Activated CD4-positive, alpha-beta memory T cell treated with anti-CD3 and anti-CD28 coated beads for 36 hours (primary cell): ENCODE measurements at regions of chr6 and their contacts with region 1.

Region 1: GRCh38 chr6:42547407-42548329 is 16.2 kb upstream of the UBR2 start:
- DNase-seq: peak; percentile 92
- H3K4me3 Mint-ChIP-seq: peak overlapping the region; percentile 62
- H3K27ac Mint-ChIP-seq: no peak overlapping the region
- H3K4me1 Mint-ChIP-seq: peaks cover 23% of the 10 kb centered on the region
- H3K27me3 Mint-ChIP-seq: peaks cover 4% of the 10 kb centered on the region

Region 2: DNA sequence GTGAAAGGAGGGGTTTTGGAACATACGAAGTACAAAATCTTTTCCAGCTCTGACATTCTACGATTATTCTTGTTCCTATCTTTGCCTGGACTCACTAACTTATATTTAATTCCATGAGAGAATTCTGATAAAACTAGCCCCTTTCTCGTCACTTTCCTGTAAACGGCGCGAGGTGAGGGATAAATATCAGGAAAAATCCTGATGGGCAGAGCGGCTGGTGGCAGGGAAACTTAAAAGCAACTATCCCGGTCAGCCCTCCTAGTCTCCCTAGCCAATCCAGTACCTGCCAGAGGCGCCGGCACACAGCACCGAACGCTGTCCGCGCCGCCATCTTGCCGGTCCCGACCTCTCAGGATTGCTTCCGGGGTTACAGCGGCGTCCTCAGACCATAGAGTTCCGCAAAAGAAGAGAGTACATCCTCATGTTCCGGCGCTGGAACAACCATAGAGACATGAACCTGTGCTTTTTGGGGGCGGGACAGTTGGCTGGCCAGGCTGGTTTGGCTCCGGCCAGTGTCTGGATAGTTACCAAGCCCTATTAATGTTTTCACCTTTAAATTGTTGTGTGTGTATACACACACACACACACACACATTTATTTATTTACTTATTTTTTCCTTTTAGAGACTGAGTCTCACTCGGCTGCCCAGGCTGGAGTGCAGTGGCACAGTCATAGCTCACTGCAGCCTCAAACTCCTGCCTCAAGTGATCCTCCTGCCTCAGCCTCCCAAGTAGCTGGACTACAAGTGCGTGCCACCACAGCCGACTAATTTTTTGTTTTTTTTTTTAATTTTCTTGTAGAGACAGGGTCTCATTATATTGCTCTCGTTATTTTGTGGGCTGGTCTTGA is 329.9 kb before region 1 on chr6 and contains the start of gene MRPS10:
- CTCF ChIA-PET with region 1: interaction called, 32 read pairs
- POLR2A ChIA-PET with region 1: interaction called, 6 read pairs
- intact Hi-C with region 1: loop called (anchors 5 kb)
- DNase-seq: peak; percentile 95
- H3K4me3 Mint-ChIP-seq: peak within 1 kb of the TSS; percentile 99
- H3K27ac Mint-ChIP-seq: peak within 1 kb of the TSS; percentile 94
- H3K4me1 Mint-ChIP-seq: peaks cover 39% of the 10 kb centered on the region
- H3K27me3 Mint-ChIP-seq: no peaks in the 10 kb centered on the region
- total RNA-seq, gene MRPS10: 38.6 to 40.3 TPM

Region 3: DNA sequence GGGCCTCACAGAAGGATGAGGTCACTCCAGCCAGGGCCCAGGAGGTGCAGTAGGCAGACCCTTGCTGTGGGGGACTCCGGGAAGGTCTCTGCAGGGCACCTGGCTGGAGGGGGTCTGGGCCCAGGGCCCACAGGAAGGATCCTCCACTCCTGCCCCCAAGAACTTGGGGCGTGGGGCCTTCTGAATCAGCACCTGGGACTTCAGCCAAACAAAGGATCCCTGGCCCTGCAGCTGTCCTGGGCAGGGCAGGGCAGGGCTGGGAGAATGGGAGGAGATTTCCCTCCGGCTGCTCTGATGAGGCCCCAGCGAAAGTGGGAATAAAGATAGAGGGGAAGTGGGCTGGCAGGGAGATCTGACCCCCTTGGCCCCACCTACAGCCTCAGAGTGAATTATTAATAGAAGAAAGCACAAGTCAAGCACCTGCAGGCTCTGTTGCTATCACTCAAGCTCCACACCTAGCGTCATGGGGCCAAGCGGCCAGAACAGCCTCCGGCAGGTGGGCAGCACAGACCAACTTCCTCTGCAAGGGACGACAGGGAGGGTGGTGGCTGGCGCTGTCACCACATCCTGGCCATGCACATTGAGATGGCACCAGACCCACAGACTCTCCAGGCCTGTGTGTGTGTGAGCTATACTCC is 268.4 kb before region 1 on chr6:
- CTCF ChIA-PET with region 1: interaction called, 16 read pairs
- POLR2A ChIA-PET with region 1: no interaction called
- intact Hi-C with region 1: no loop called
- DNase-seq: peak; percentile 58
- H3K4me3 Mint-ChIP-seq: no peak overlapping the region
- H3K27ac Mint-ChIP-seq: peak overlapping the region; percentile 23
- H3K4me1 Mint-ChIP-seq: peaks cover 43% of the 10 kb centered on the region
- H3K27me3 Mint-ChIP-seq: no peaks in the 10 kb centered on the region

Region 4: DNA sequence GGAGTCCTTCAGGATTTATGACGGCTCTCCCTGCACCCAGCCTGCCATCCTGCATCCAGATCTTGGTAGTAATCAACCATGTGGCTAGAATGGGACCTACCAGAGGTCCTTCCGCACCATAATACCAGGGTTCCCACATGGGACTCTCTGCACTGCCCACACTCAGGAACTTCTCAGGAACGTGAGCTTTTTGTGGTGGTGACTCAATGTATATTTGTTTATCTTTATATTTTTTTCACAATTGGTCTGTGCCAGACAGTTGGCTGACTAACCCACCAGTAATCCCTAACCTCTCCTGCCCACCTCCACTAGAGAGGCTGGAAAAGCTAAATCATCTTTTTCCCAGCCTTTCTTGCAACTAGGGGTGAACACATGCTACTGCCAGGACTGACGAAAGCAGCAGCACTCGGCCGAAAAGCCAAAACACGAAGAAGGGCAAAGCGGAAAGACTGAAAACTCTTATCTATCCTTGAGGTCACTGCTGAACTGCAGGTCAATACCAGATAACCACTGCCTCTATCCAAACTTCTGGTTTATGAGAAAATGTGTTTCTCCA is 208.9 kb before region 1 on chr6:
- CTCF ChIA-PET with region 1: interaction called, 19 read pairs
- POLR2A ChIA-PET with region 1: no interaction called
- intact Hi-C with region 1: no loop called
- DNase-seq: peak; percentile 52
- H3K4me3 Mint-ChIP-seq: peak overlapping the region; percentile 47
- H3K27ac Mint-ChIP-seq: peak overlapping the region; percentile 84
- H3K4me1 Mint-ChIP-seq: peaks cover 79% of the 10 kb centered on the region
- H3K27me3 Mint-ChIP-seq: no peaks in the 10 kb centered on the region

Region 5: DNA sequence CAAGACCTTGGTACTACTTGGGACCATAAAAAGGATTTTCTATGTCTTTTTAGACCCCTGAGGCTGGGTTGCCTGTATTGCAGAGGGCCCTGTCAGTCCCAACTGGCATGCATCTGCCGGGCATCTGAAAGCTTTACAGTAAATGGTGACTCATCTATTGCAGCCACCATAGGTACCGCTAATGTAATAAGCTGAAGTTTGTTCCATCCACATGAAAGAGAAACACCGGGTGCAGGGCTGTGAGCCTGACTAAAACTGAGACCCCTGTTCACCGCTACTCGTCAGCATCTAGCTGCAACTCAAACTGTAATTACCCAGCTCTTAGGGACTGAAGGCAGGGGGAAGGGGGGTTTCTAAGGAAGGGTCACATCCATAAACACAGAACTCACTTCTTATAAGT is 145.5 kb before region 1 on chr6:
- CTCF ChIA-PET with region 1: interaction called, 23 read pairs
- POLR2A ChIA-PET with region 1: no interaction called
- intact Hi-C with region 1: no loop called
- DNase-seq: peak; percentile 85
- H3K4me3 Mint-ChIP-seq: no peak overlapping the region
- H3K27ac Mint-ChIP-seq: peak overlapping the region; percentile 76
- H3K4me1 Mint-ChIP-seq: peaks cover 81% of the 10 kb centered on the region
- H3K27me3 Mint-ChIP-seq: no peaks in the 10 kb centered on the region

Region 6: GRCh38 chr6:42459888-42460287 is 87.8 kb before region 1 on chr6:
- CTCF ChIA-PET with region 1: interaction called, 24 read pairs
- POLR2A ChIA-PET with region 1: no interaction called
- intact Hi-C with region 1: no loop called
- DNase-seq: no peak
- H3K4me3 Mint-ChIP-seq: no peak overlapping the region
- H3K27ac Mint-ChIP-seq: no peak overlapping the region
- H3K4me1 Mint-ChIP-seq: no peaks in the 10 kb centered on the region
- H3K27me3 Mint-ChIP-seq: no peaks in the 10 kb centered on the region

Region 7: DNA sequence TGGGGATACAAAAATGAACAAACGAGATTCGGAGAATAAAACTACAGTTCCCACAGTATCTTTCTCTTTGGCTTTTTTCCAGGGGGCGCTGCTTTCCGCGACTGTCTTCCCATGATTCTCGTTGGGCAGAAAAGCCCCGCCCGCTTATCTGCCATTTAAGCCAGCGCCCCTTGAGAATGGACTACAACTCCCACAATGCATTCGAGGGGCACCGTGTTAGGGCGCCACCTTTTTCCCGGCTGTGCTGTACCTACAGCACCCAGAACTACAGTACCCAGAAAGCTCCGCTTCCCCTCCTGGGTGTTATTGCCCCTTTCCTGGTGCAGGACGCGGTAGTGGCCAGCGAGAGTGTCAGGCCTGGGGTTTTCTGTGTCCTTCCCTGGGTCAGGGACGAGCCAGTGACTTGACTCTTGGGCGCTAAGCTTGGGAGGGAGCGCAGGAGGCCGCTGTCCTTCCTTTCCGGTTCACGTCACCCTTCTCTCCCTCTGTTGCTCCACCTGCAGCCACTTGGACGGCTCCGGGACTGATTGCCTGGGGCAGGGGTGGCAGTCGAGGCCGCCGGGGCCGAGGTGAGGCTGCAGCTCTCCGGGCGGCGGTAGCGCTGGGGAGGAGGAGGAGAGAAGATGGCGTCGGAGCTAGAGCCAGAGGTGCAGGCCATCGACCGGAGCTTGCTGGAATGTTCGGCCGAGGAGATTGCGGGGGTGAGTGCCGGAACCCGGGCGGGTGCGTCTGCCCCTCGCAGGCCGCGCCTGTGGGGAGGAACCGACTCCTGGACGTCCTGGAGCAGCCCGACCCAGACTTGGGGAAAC is 16.2 kb after region 1 on chr6 and contains the start of gene UBR2:
- CTCF ChIA-PET with region 1: interaction called, 81 read pairs
- POLR2A ChIA-PET with region 1: interaction called, 3 read pairs
- intact Hi-C with region 1: no loop called
- DNase-seq: peak; percentile 96
- H3K4me3 Mint-ChIP-seq: peak within 1 kb of the TSS; percentile 83
- H3K27ac Mint-ChIP-seq: peak within 1 kb of the TSS; percentile 91
- H3K4me1 Mint-ChIP-seq: peaks cover 25% of the 10 kb centered on the region
- H3K27me3 Mint-ChIP-seq: no peaks in the 10 kb centered on the region
- total RNA-seq, gene UBR2: 31.4 to 32.5 TPM

Region 8: DNA sequence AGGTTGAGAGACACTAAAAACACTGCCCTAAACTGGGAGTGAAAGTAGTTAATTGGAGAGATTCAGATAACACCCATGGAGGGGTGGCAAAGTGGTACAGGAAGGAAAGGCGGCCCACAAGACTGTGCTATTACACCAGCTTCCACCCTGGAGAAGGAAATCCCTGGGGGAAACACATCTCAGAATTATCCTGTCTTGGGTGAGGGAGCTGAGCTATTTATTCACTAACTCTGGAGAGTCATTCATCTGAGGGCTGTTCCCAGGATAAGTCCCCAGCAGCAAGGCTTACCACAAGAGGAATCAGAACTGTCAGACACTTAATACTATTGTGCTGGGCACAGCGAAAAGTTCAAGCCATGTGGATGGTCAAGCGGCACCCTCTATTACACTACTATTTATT is 188.3 kb after region 1 on chr6:
- CTCF ChIA-PET with region 1: no interaction called
- POLR2A ChIA-PET with region 1: no interaction called
- intact Hi-C with region 1: no loop called
- DNase-seq: no peak
- H3K4me3 Mint-ChIP-seq: no peak overlapping the region
- H3K27ac Mint-ChIP-seq: no peak overlapping the region
- H3K4me1 Mint-ChIP-seq: no peaks in the 10 kb centered on the region
- H3K27me3 Mint-ChIP-seq: no peaks in the 10 kb centered on the region

Region 9: DNA sequence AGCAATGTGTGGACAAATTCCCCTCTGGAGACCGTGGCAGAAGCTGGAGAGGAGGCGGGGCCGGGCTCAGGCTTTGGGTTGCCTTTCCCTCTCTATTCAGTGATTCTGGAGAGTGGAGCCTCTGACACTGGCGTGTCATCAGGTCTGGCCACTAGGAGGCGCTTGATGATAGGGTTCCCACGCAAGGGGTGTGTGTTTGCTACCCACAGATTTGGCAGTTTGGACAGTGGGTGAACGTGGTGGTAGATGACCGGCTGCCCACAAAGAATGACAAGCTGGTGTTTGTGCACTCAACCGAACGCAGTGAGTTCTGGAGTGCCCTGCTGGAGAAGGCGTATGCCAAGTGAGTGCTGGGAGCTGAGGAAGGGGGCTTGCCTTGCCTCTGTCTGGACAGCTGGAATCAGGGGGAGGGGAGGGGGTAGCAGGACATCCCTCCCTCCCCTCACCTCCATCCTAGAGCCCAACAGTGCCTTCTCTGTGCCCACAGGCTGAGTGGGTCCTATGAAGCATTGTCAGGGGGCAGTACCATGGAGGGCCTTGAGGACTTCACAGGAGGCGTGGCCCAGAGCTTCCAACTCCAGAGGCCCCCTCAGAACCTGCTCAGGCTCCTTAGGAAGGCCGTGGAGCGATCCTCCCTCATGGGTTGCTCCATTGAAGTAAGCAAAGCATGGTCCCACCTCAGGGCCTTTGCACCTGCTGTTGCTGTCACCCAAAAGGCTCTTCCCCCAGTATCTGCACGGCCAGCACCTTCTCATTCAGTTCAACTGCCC is 1625.2 kb after region 1 on chr6:
- CTCF ChIA-PET with region 1: no interaction called
- POLR2A ChIA-PET with region 1: no interaction called
- intact Hi-C with region 1: no loop called
- DNase-seq: peak; percentile 87
- H3K4me3 Mint-ChIP-seq: no peak overlapping the region
- H3K27ac Mint-ChIP-seq: peak overlapping the region; percentile 9
- H3K4me1 Mint-ChIP-seq: peaks cover 18% of the 10 kb centered on the region
- H3K27me3 Mint-ChIP-seq: peaks cover 21% of the 10 kb centered on the region